Heart left ventricle (tissue), 16 donors: ENCODE measurements at regions of chr2 and their contacts with region 1.

Region 1: DNA sequence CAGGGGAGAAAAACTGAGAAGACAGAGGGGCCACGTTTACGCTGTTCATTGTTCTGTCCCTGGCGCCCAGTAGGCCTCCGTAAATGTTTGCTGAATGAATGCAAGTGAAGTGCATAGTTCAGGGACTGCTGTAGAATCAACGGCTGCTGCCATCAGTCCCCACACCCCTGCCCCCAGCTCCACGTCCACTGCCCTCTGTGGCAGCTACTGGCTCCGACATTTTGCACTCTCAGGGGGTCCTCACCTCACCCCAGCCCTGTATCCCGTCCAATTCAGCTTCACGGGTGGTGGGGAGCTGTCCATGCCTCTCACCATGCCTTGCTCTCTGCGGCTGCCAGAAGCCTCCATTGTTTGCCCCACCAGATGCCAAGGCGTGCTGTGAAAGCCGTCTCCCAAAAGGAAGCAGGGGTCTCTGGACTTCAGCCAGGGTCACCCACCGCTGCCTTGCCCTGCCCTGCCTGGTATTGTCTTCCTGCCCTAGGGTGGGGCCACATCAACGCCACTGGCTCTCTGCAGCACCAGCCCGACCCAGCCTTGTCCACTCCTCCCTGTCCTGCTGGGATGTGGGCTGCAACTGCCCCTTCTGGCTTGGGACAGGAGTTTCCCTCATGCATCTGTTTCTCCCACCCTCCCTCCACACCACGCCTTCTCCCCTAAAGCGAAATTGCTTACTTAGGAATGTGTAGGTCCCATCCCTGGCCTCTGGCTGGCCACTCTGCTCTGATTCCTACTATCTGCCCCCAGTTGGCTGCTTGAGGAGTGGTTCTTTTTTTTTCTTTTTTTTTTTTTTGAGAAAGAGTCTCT is 86.0 kb downstream of the RHOB start:
- DNase-seq: peak in 1 of 5 donors; percentile 49
- ATAC-seq: no peak
- H3K4me3 ChIP-seq: no peak overlapping the region
- H3K27ac ChIP-seq: peak overlapping the region in 6 of 12 donors; percentile 7 to 61 (median 35)
- H3K4me1 ChIP-seq: peaks cover 0 to 63% (median 25%) of the 10 kb centered on the region in 12 donors
- H3K27me3 ChIP-seq: no peaks in the 10 kb centered on the region
- CTCF ChIP-seq: no peak
- POLR2A ChIP-seq: no peak

Region 2: DNA sequence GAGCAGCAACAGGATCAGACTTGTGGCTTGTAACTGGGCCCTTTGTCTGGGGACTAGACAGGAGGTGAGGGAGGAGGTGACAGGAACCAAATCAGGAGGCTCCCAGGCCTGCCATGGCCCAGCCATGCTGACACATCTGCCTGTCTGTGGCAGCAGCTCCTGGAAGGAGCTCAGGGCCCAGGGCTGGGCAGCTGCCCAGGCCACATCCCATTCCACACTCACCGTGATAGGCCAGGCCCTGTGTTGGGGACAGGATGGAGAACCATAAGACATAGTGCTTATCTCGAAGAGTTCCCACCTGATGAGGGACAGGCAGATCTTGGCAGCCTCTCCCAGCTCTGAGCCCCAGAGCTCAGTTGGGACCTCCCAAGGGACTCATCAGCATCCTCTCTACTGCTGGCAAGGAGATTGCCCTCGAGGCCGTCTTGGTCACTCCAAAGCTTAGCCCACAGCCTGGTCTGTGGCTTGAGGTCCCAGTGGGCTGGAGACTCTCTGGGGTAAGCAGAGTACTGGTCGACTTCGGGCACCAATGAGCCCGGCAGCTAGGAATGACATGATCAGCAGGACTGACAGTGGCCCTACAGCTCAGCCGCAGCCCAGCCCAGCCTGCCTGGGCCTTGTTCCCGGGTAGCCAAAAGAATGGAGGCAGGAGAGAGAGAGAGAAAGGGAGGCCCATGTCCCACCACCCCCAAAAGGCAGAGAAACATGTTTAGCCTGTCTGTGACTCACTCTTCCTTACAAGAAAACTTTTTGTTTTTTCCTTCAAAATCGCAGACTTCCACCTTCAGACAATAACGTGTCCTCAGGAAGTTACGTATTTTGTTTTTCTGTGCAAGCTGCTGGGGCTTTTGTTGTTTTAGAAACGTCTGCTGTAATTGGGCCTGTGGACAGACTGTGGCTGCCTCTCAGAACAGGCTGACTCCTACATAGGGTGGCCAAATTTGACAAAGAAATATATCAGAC is 35.9 kb after region 1 on chr2:
- intact Hi-C with region 1: loop called in 6 of 10 experiments (anchors 5 kb)
- DNase-seq: peak in 1 of 5 donors; percentile 49
- ATAC-seq: peak; percentile 44 to 73 (median 54)
- H3K4me3 ChIP-seq: no peak overlapping the region
- H3K27ac ChIP-seq: peak overlapping the region; percentile 75 to 96 (median 82)
- H3K4me1 ChIP-seq: peaks cover 3 to 79% (median 64%) of the 10 kb centered on the region in 12 donors
- H3K27me3 ChIP-seq: no peaks in the 10 kb centered on the region
- CTCF ChIP-seq: no peak
- POLR2A ChIP-seq: no peak

Region 3: DNA sequence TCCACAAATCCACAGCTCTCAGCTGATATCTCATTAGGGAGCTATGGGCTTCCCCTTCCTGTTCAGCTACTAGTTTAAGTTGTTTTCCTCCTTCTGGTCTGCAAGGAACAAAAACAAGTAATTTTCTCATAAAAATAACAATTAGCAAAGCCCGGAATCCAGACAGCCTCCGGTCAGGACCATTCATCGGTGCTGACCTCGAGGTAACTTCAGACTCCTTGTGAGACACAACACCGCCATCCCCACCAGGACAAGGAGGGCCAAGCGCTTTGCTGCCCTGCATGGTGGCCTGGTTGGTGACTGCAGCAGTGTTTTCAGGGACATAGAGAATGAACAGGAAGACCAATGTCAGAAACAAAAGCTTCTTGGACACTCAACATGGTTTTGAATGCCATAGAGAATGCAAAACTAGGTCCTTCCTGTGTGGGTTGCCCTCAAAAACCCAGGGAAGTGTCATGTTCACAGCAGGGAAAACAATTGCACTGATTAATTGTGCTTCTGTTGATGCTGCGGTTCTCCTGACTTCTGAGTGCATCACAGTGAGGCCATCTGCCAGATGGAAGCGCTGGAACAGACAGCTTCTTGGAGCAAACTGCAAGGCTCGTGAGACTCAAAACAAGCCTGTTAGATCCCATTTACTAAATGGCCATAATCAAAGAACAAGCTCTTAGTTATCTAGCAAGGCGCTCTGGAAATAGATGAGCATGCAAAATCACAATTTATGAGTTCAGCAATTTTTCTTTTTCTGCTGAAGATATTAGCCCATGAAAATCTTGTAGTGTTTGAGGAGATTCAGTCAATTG is 41.0 kb after region 1 on chr2:
- intact Hi-C with region 1: loop called in 6 of 10 experiments (anchors 5 kb)
- DNase-seq: peak in 1 of 5 donors; percentile 61
- ATAC-seq: no peak
- H3K4me3 ChIP-seq: no peak overlapping the region
- H3K27ac ChIP-seq: peak overlapping the region; percentile 48 to 94 (median 69)
- H3K4me1 ChIP-seq: peaks cover 14 to 99% (median 91%) of the 10 kb centered on the region in 12 donors
- H3K27me3 ChIP-seq: no peaks in the 10 kb centered on the region
- CTCF ChIP-seq: no peak
- POLR2A ChIP-seq: no peak